Ascending aorta (tissue), 2 donors: ENCODE measurements at regions of chr20 and their contacts with region 1.

Region 1: DNA sequence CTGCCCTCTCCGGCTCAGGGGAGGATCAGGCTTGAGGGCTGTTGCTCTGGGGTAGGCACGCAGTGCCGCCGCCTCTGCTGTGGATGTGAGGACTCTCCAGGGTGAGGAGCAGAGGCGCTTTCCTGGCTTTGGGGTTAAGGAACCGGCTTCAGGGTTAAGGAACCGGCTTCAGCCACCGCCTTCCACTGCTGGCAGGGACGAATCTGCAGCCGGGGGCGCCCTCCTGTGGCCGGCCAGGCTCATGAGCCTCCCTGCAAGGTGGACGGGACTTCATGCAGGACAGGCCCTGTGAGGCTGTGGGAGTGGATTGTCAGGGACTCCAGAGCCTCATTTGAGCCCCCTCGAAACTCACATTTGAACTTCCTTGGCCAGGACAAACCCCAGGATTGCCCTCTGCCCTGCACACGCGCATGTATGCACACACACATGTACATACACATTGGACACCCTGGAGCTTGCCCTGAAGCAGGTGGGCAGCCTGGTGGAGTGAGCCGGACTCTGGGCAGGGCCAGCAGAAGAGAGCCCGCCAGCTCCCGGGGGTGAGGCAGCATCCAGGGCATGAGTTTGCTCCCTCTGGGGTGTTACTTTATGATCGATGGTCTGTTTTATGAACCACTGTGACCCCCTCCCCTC is 146.8 kb downstream of the PHACTR3 start:
- DNase-seq: peak in 1 of 2 donors; percentile 70
- H3K4me3 ChIP-seq: no peak overlapping the region
- H3K27ac ChIP-seq: no peak overlapping the region
- H3K4me1 ChIP-seq: peaks cover 4 to 11% of the 10 kb centered on the region in 2 donors
- H3K27me3 ChIP-seq: no peaks in the 10 kb centered on the region
- CTCF ChIP-seq: peak; percentile 37 to 64 (median 46)

Region 2: GRCh38 chr20:59571551-59572314 is 179.4 kb before region 1 on chr20:
- intact Hi-C with region 1: loop called (anchors 2 kb)
- DNase-seq: peak in 1 of 2 donors; percentile 64
- H3K4me3 ChIP-seq: peak overlapping the region; percentile 31 to 57
- H3K27ac ChIP-seq: no peak overlapping the region
- H3K4me1 ChIP-seq: no peaks in the 10 kb centered on the region
- H3K27me3 ChIP-seq: peaks cover 6% of the 10 kb centered on the region
- CTCF ChIP-seq: peak; percentile 58 to 93 (median 88)

Region 3: GRCh38 chr20:59598625-59599310 is 152.4 kb before region 1 on chr20:
- intact Hi-C with region 1: loop called (anchors 1 kb)
- DNase-seq: no peak
- H3K4me3 ChIP-seq: no peak overlapping the region
- H3K27ac ChIP-seq: no peak overlapping the region
- H3K4me1 ChIP-seq: no peaks in the 10 kb centered on the region
- H3K27me3 ChIP-seq: peaks cover 4% of the 10 kb centered on the region
- CTCF ChIP-seq: peak; percentile 13 to 52 (median 36)